ENCODE measurements at regions of chr17 and their contacts with region 1.

Region 1: DNA sequence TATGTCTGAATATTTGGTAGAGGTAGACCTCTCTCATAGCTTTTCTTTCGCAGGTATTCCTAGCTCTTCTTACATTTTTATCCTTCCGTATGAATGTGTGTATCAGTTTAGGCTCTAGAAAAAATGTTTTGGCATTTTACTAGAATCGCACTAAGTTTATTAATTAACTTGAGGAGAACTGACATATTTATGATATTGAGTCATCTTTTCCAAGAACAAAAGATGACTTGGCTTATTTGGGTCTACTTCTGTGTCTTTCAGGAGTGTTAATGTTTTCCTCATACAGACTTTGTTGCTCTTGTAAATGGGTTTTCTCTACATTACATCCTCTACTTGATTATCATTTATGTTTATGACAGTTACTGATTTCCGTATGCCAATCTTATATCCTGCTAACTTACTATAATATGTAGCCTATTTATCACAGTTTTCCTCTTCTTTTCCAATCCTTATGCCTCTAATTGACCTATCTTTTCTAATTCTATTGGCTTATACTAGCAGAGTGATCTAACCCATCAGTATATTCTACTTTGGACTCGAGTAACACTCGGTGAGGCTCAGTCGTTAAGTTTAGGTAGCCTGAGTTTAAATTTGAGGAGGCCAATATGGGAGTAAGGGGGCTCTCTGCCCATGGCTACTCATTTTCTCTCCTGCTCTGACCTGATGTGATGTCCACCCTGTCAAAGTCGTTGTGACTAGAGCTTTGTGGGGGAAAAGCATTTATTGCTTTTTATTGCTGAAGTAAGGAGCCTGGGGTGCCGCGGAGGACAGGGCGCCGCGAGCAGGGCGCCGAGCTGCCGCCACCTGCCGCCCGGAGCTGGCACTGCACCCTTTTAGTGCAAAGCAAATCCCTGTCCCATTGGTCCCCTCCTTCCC is 20.0 kb downstream of the ST6GALNAC1 start:
- DNase-seq: peak; percentile 58 to 87 (median 76)
- ATAC-seq: peak; percentile 100
- H3K4me3 ChIP-seq: no peak overlapping the region
- H3K4me3 Mint-ChIP-seq: no peak overlapping the region
- H3K27ac ChIP-seq: no peak overlapping the region
- H3K27ac Mint-ChIP-seq: no peak overlapping the region
- H3K4me1 ChIP-seq: peaks cover 3% of the 10 kb centered on the region
- H3K4me1 Mint-ChIP-seq: peaks cover 4% of the 10 kb centered on the region
- H3K27me3 ChIP-seq: no peaks in the 10 kb centered on the region
- H3K27me3 Mint-ChIP-seq: no peaks in the 10 kb centered on the region
- CTCF ChIP-seq: peak; percentile 95

Region 2: DNA sequence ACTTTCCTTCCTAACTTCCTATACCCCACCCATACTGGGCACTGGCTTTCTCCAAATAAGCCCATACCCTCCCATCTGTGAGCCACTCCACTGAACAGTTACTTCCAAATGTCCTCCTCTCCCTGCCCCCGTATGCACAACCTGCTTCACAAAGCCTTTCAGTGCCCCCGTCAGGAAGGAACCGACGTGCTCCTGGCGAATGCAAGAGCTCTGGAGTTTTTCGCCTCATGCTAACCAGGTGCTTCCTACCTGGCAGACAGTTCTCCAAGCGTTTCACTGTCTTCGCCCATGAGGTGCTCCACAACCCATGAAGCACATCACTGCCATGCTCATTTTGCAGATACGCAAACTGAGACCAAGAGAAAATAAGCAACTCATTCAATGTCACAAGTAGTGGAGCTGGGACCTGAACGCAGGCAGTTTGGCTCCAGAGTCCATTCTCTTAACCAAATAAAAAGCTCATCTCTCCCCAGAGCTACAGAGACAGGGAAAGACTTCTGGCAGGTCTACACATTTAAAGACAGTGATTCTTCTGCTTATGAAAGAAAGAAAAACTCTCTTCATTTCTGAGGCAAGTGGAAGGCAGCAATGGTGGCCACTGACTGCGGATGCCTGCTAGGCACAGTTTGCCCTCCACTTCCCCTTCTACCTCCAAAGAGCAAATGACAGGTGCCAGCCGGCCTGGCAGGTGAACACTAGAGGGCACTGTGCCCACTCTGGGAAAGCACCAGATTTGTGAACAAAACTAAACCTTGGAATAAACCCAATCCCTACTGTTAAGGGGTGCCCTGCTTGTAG is 215.3 kb before region 1 on chr17:
- CTCF ChIA-PET with region 1: interaction called, 5 read pairs
- POLR2A ChIA-PET with region 1: no interaction called
- intact Hi-C with region 1: loop called in 1 of 2 experiments (anchors 1 kb)
- DNase-seq: peak; percentile 53 to 81 (median 75)
- ATAC-seq: peak; percentile 92
- H3K4me3 ChIP-seq: no peak overlapping the region
- H3K4me3 Mint-ChIP-seq: no peak overlapping the region
- H3K27ac ChIP-seq: no peak overlapping the region
- H3K27ac Mint-ChIP-seq: peak overlapping the region; percentile 70
- H3K4me1 ChIP-seq: peaks cover 4% of the 10 kb centered on the region
- H3K4me1 Mint-ChIP-seq: peaks cover 9% of the 10 kb centered on the region
- H3K27me3 ChIP-seq: no peaks in the 10 kb centered on the region
- H3K27me3 Mint-ChIP-seq: no peaks in the 10 kb centered on the region
- CTCF ChIP-seq: peak; percentile 87

Region 3: GRCh38 chr17:76515274-76515949 is 108.1 kb before region 1 on chr17:
- CTCF ChIA-PET with region 1: interaction called, 68 read pairs
- POLR2A ChIA-PET with region 1: interaction called, 3 read pairs
- intact Hi-C with region 1: no loop called
- DNase-seq: peak; percentile 72 to 99 (median 84)
- ATAC-seq: peak; percentile 82
- H3K4me3 ChIP-seq: peak overlapping the region; percentile 32 to 44
- H3K4me3 Mint-ChIP-seq: peak overlapping the region; percentile 67
- H3K27ac ChIP-seq: peak overlapping the region; percentile 85 to 92
- H3K27ac Mint-ChIP-seq: peak overlapping the region; percentile 97
- H3K4me1 ChIP-seq: peaks cover 43% of the 10 kb centered on the region
- H3K4me1 Mint-ChIP-seq: peaks cover 49% of the 10 kb centered on the region
- H3K27me3 ChIP-seq: no peaks in the 10 kb centered on the region
- H3K27me3 Mint-ChIP-seq: no peaks in the 10 kb centered on the region
- CTCF ChIP-seq: no peak

Region 4: DNA sequence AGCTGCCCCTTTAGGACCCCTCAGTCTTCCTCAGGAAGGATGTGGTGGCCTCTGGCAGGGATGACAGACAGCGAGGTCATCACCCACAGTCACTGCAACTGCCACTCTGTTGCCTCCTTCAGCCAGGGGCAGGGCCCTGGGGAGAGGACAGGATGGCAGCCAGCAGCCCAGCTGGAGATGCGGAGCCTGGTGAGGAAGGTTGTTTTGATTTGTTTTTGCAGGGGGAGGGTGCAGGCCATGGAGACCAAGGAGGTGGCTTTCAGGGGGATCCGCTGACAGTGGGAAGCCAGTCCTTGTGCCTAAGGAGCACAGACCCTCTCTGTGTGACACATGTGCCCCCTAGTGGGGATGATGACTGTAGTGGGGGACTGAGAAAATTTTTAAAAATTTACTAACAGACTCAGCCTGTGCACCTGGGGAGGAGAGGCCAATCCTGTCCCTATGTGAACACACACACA is 76.3 kb before region 1 on chr17:
- CTCF ChIA-PET with region 1: interaction called, 21 read pairs
- POLR2A ChIA-PET with region 1: no interaction called
- intact Hi-C with region 1: no loop called
- DNase-seq: peak; percentile 30 to 83 (median 72)
- ATAC-seq: peak; percentile 94
- H3K4me3 ChIP-seq: no peak overlapping the region
- H3K4me3 Mint-ChIP-seq: no peak overlapping the region
- H3K27ac ChIP-seq: no peak overlapping the region
- H3K27ac Mint-ChIP-seq: no peak overlapping the region
- H3K4me1 ChIP-seq: peaks cover 7% of the 10 kb centered on the region
- H3K4me1 Mint-ChIP-seq: peaks cover 11% of the 10 kb centered on the region
- H3K27me3 ChIP-seq: no peaks in the 10 kb centered on the region
- H3K27me3 Mint-ChIP-seq: peaks cover 8% of the 10 kb centered on the region
- CTCF ChIP-seq: peak; percentile 62

Region 5: DNA sequence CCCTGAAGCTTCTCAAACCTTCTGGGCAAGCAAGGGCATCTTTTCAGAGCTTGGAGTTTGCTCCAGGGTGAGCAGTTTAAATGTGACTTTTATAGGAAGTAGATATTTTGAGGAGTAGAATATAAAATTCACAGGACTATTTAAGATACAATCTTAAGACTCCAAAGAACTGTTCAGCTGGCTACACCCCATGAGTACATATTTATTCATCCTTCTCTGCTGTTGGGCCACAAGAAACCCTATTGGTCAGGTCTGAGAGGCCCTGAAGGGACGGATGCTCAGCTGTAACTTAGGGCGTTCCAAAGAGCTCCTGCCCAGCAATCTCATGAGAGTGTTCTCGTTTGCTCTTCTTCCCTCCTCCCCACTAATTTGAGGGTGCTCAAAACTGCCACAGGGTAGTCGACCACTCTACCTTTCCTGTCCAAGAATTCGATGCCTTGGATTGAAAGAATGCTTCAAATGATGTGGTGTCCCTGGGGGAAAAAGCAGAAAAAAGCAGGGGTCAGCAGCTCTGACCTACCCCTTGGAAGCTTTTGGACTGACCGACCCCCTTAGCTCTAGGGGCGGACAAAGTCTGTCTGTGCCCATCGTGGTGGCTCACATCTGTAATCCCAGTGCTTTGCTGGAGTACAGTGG is 45.0 kb before region 1 on chr17:
- CTCF ChIA-PET with region 1: interaction called, 11 read pairs
- POLR2A ChIA-PET with region 1: interaction called, 3 read pairs
- intact Hi-C with region 1: no loop called
- DNase-seq: no peak
- ATAC-seq: no peak
- H3K4me3 ChIP-seq: no peak overlapping the region
- H3K4me3 Mint-ChIP-seq: no peak overlapping the region
- H3K27ac ChIP-seq: no peak overlapping the region
- H3K27ac Mint-ChIP-seq: no peak overlapping the region
- H3K4me1 ChIP-seq: no peaks in the 10 kb centered on the region
- H3K4me1 Mint-ChIP-seq: no peaks in the 10 kb centered on the region
- H3K27me3 ChIP-seq: peaks cover 0 to 2% of the 10 kb centered on the region in 2 experiments
- H3K27me3 Mint-ChIP-seq: peaks cover 5% of the 10 kb centered on the region
- CTCF ChIP-seq: no peak

Region 6: DNA sequence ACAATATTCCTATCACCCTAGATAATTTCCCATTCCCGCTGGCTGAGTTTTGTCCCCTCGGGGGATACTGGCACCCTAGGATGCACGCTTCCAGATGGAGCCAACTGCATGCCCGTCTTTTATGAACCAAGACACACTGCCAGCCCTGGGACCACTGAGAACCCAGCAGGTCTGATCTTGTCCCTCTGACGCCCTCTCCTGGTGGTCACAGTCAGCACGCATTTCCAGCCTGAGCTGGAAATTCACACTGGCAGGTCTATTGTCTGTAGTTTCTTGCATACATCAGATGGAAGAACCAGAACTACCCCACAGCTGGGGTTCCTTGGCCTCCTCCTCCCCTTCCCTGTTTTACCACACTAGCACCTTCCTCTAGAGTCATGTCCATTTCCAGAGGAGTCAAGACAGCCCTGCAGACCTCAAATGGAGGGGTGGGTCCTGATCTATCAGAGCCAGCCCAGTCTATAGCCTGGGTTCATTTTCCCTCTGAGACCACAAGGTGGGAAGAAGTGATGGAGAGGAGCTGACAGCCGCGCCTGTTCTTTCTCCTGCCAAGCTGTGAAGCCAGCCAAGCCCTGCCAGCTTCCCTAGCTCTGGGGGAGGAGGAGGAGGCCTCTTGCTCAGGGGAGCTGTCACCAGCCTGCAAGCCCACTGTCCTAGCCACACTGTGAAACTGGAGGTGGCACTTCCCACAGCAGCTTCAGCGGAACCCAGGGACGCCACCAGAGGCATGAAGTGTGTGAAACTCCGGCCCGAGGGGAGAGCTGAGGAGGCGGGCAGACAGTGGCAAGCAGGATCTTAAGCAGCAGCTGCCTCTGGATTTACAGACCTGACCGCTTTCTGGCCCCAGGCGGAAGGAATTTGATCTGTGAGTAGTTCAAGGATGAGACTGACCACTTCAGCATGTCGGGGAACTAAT is 58.0 kb after region 1 on chr17:
- CTCF ChIA-PET with region 1: interaction called, 40 read pairs
- POLR2A ChIA-PET with region 1: interaction called, 5 read pairs
- intact Hi-C with region 1: loop called (anchors 1 kb)
- DNase-seq: peak; percentile 55 to 86 (median 79)
- ATAC-seq: peak; percentile 78
- H3K4me3 ChIP-seq: no peak overlapping the region
- H3K4me3 Mint-ChIP-seq: no peak overlapping the region
- H3K27ac ChIP-seq: peak overlapping the region in 1 of 2 experiments; percentile 39
- H3K27ac Mint-ChIP-seq: no peak overlapping the region
- H3K4me1 ChIP-seq: peaks cover 29% of the 10 kb centered on the region
- H3K4me1 Mint-ChIP-seq: peaks cover 11% of the 10 kb centered on the region
- H3K27me3 ChIP-seq: no peaks in the 10 kb centered on the region
- H3K27me3 Mint-ChIP-seq: no peaks in the 10 kb centered on the region
- CTCF ChIP-seq: peak; percentile 77

Region 7: GRCh38 chr17:76736349-76737081 is 113.0 kb after region 1 on chr17:
- CTCF ChIA-PET with region 1: no interaction called
- POLR2A ChIA-PET with region 1: no interaction called
- intact Hi-C with region 1: no loop called
- DNase-seq: peak; percentile 32 to 82 (median 66)
- ATAC-seq: peak; percentile 7
- H3K4me3 ChIP-seq: peak overlapping the region; percentile 88 to 100
- H3K4me3 Mint-ChIP-seq: peak overlapping the region; percentile 96
- H3K27ac ChIP-seq: peak overlapping the region; percentile 93 to 99
- H3K27ac Mint-ChIP-seq: peak overlapping the region; percentile 97
- H3K4me1 ChIP-seq: peaks cover 44% of the 10 kb centered on the region
- H3K4me1 Mint-ChIP-seq: peaks cover 65% of the 10 kb centered on the region
- H3K27me3 ChIP-seq: no peaks in the 10 kb centered on the region
- H3K27me3 Mint-ChIP-seq: no peaks in the 10 kb centered on the region
- CTCF ChIP-seq: no peak